ENCODE measurements at regions of chr16 and their contacts with region 1.

Region 1: DNA sequence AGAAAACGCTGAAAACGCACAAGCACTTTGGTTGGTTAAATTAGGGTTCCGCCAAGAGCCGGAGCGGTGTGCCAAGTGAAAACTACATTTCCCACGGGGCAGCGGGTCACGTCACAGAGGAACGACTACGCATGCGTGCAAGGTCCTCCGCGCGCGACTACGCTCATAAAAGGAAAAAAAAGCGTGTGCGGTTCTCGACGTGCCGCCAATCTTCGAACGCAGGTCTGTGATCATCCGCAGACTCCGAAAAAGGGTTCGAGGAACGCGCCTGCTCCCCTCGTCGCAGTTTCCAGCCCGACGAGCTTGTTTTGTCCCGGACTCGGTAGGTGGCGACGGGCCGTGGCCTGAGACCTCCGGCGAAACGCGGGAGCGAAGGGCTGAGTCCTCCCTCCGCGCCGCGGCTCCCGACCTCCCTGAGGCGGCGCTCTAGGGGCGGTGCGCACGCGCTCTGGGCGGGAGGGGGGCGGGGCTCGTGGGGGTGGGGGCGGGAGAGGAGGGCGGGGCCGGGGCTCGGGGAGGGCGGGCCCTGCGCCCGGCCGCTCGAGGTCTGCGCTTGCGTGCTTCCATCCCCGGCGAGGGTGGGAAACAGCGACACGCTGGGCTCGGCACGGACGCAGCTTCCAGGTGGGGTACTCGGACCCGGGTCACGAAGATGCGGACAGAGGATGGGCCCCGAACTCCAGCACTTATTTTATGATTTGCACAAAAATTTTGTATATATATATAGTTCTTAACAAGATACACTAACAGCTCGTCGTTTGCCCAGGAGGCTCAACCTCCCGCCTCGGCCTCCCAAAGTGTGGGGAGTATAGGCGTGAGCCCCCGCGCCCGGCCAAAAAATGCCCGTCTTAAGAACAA is at the start of gene SGF29:
- DNase-seq: peak; percentile 92
- H3K4me3 ChIP-seq: peak within 1 kb of the TSS; percentile 68
- H3K27ac ChIP-seq: peak within 1 kb of the TSS; percentile 94
- H3K4me1 ChIP-seq: peaks cover 20% of the 10 kb centered on the region
- H3K27me3 ChIP-seq: no peaks in the 10 kb centered on the region
- CTCF ChIP-seq: peak; percentile 45
- total RNA-seq, gene SGF29: 16.5 TPM

Region 2: DNA sequence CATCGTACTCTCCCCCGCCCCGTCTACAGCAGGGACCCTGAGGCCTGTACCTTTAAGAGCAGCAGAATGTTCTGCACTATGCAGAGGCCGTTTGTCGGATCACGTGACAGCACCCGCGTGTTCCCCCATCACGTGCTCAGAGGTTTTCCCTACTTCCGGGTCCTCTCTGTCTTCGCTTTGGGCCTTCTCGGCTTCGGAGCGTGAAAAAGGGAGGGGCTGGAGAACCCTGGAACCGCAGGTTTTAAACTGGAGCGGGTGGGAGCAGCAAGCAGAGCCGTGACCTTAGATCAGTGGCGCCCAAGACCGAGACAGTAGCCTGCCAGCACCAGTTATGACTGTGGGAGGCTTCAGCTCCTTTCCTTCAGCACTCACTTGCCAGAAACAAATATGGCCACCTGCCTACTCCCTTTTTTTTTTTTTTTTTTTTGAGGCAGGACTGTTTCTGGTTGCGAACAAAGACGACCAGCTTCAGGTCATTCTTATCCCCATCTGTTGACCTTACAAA is 62.0 kb before region 1 on chr16 and contains the start of gene CLN3:
- intact Hi-C with region 1: loop called (anchors 10 kb)
- DNase-seq: peak; percentile 91
- H3K4me3 ChIP-seq: peak within 1 kb of the TSS; percentile 95
- H3K27ac ChIP-seq: peak within 1 kb of the TSS; percentile 95
- H3K4me1 ChIP-seq: peaks cover 13% of the 10 kb centered on the region
- H3K27me3 ChIP-seq: no peaks in the 10 kb centered on the region
- CTCF ChIP-seq: no peak
- total RNA-seq, gene CLN3: 13.6 TPM